ENCODE measurements at regions of chr9 and their contacts with region 1.

Region 1: GRCh38 chr9:131739980-131740648 is at the start of gene RAPGEF1:
- H3K4me3 ChIP-seq: peak within 1 kb of the TSS; percentile 51
- H3K27ac ChIP-seq: peak within 1 kb of the TSS; percentile 85
- H3K4me1 ChIP-seq: peaks cover 6% of the 10 kb centered on the region; the same call in 1 of the 2 replicates
- CTCF ChIP-seq: no peak

Region 2: GRCh38 chr9:131382850-131383729 is 357.0 kb before region 1 on chr9:
- CTCF ChIA-PET with region 1: no interaction called
- POLR2A ChIA-PET with region 1: no interaction called
- H3K4me3 ChIP-seq: no peak overlapping the region
- H3K27ac ChIP-seq: peak overlapping the region; percentile 44; the same call in 1 of the 2 replicates
- H3K4me1 ChIP-seq: peaks cover 3% of the 10 kb centered on the region; the same call in 1 of the 2 replicates
- CTCF ChIP-seq: no peak

Region 3: DNA sequence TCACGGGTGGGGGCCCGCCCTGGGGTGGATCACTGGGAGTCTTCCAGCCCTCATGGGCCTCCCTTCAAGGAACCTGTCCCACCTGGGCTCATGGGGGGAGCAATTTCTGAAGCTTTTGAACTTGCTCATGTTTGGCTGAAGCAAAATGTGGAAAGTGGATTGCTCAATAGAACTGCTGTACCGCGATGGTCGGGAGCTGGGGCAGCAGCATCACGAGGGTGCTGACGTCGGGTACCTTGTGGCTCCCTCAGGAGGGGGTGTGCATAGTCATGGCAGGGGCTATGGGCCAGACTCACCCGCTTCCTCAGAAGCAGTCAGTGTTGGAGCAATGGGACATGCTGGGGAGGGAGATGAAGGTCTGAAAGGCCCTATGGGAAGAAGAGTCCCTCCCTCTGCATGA is 136.9 kb before region 1 on chr9:
- CTCF ChIA-PET with region 1: interaction called, 14 read pairs
- POLR2A ChIA-PET with region 1: interaction called, 3 read pairs
- H3K4me3 ChIP-seq: no peak overlapping the region
- H3K27ac ChIP-seq: no peak overlapping the region
- H3K4me1 ChIP-seq: no peaks in the 10 kb centered on the region
- CTCF ChIP-seq: no peak

Region 4: DNA sequence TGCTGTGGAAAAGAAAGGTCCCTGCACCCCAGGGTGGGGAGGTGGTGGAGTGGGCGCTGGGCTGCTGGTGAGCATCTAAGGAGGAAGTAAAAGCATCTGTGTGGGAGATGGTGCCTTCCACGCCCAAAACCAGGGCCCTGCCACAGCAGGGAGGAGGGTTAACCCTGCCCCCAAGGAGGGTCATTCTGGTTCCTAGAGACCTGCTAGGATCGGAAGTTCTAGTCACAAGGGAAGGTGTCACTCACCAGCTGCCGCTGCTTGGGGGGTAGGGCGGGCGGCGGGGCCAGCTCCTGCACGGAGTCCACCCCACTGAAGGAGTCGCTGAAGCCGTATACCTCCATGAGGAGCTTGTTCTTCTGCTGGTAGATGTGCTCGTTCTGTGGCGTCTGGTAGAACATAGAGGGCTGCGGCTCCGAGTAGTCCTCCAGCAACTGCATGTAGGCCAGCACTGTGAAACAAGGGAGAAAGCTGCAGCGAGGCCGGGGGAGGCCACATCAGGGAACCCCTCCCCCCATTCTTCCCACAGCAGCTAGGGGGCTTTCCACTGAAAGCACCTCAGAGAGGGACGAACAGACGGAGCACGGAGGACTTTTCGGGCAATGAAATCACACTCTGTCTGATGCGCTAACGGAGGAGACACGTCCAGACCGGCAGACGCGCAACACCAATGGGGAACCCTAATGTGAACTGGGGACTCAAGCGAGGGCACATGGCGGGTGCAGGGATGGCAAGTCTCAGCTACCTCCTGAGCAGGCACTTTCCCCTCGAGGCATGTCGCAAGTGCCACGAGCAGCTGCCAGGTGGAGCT is 118.4 kb before region 1 on chr9:
- CTCF ChIA-PET with region 1: interaction called, 10 read pairs
- POLR2A ChIA-PET with region 1: interaction called, 4 read pairs
- H3K4me3 ChIP-seq: no peak overlapping the region
- H3K27ac ChIP-seq: no peak overlapping the region
- H3K4me1 ChIP-seq: peaks cover 2% of the 10 kb centered on the region; the same call in 1 of the 2 replicates
- CTCF ChIP-seq: no peak

Region 5: DNA sequence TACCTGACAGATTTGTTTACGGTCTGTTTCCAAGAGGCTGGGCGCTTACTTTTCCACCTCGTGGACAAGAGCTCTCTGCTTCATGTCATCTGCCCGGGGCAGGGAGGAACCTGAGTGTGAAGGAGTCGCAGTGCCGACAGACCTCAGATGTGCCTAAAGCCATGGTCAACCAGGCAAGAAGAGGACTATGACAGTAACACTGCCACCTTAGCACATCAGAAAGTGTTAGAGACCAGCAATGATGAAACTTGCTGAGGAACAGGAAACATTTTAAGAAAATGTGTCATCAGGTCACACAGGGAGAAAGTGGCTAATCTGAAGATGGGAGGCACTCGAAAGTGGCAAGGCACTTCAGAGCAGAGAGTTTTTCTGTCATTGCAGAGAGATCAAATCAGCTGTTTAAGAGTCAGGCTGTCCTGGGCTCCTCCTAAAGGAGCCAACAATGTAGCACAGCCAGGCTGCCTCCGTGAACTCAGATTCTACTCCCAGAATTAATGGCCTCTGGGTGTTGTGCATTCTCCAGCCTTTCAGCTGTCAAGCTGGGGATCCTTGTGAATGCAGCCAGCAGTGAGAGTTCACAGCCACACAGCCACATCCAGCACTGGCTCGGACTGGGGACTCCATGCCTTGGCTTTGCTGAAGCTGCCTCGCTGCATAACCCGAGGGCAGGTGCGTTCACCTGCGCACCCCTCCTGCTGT is 94.9 kb before region 1 on chr9:
- CTCF ChIA-PET with region 1: interaction called, 10 read pairs
- POLR2A ChIA-PET with region 1: no interaction called
- H3K4me3 ChIP-seq: no peak overlapping the region
- H3K27ac ChIP-seq: no peak overlapping the region
- H3K4me1 ChIP-seq: no peaks in the 10 kb centered on the region
- CTCF ChIP-seq: no peak

Region 6: GRCh38 chr9:131697097-131697496 is 43.0 kb before region 1 on chr9:
- CTCF ChIA-PET with region 1: interaction called, 13 read pairs
- POLR2A ChIA-PET with region 1: no interaction called
- H3K4me3 ChIP-seq: no peak overlapping the region
- H3K27ac ChIP-seq: no peak overlapping the region
- H3K4me1 ChIP-seq: no peaks in the 10 kb centered on the region; the same call in none of the 2 replicates
- CTCF ChIP-seq: peak; percentile 33; the same call in 1 of the 2 replicates

Region 7: GRCh38 chr9:131755541-131756198 is 15.6 kb after region 1 on chr9:
- CTCF ChIA-PET with region 1: interaction called, 17 read pairs
- POLR2A ChIA-PET with region 1: no interaction called
- H3K4me3 ChIP-seq: no peak overlapping the region
- H3K27ac ChIP-seq: no peak overlapping the region
- H3K4me1 ChIP-seq: no peaks in the 10 kb centered on the region
- CTCF ChIP-seq: peak; percentile 88

Region 8: GRCh38 chr9:131773911-131774379 is 33.8 kb after region 1 on chr9:
- CTCF ChIA-PET with region 1: no interaction called
- POLR2A ChIA-PET with region 1: no interaction called
- H3K4me3 ChIP-seq: no peak overlapping the region
- H3K27ac ChIP-seq: no peak overlapping the region
- H3K4me1 ChIP-seq: no peaks in the 10 kb centered on the region
- CTCF ChIP-seq: no peak

Region 9: GRCh38 chr9:131791542-131792254 is 51.6 kb after region 1 on chr9:
- CTCF ChIA-PET with region 1: no interaction called
- POLR2A ChIA-PET with region 1: no interaction called
- H3K4me3 ChIP-seq: no peak overlapping the region
- H3K27ac ChIP-seq: no peak overlapping the region
- H3K4me1 ChIP-seq: no peaks in the 10 kb centered on the region
- CTCF ChIP-seq: no peak

Measured in HEK293 (cell line).